A549 (cell line): ENCODE measurements at regions of chr11 and their contacts with region 1.

Region 1: GRCh38 chr11:122628810-122629555 is 26.5 kb upstream of the UBASH3B start:
- DNase-seq: peak; percentile 74 to 75
- ATAC-seq: peak; percentile 93 to 94
- H3K4me3 ChIP-seq: no peak overlapping the region
- H3K27ac ChIP-seq: peak overlapping the region; percentile 65 to 75; a peak in 5 of 6 replicates
- H3K4me1 ChIP-seq: peaks cover 41% of the 10 kb centered on the region
- CTCF ChIP-seq: peak; percentile 67
- EP300 ChIP-seq: no peak
- POLR2A ChIP-seq: no peak
- RAD21 ChIP-seq: peak; percentile 70 to 87

Region 2: DNA sequence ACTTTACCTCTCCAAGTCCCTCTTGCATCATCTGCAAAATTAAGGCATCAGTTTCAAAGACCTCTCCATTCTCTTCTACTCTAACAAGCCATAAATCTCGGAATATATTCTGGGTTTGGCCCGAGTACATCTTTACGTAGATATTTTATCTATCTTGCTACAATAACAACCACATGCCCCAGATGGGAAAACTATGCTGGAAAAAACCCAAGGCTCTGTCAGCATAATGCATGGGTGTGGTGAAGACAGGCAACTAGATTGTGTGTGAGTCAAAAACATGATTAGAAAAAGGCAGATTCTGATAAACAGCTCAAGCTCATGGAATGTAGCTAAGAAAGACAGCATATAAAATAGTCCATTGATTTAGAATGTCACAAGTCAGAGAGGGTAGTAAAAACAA is 284.7 kb before region 1 on chr11:
- CTCF ChIA-PET with region 1: no interaction called
- POLR2A ChIA-PET with region 1: no interaction called
- DNase-seq: no peak
- ATAC-seq: no peak
- H3K4me3 ChIP-seq: no peak overlapping the region
- H3K27ac ChIP-seq: no peak overlapping the region
- H3K4me1 ChIP-seq: peaks cover 7% of the 10 kb centered on the region; the same call in 2 of the 3 replicates
- CTCF ChIP-seq: no peak
- EP300 ChIP-seq: no peak
- POLR2A ChIP-seq: no peak
- RAD21 ChIP-seq: no peak

Region 3: DNA sequence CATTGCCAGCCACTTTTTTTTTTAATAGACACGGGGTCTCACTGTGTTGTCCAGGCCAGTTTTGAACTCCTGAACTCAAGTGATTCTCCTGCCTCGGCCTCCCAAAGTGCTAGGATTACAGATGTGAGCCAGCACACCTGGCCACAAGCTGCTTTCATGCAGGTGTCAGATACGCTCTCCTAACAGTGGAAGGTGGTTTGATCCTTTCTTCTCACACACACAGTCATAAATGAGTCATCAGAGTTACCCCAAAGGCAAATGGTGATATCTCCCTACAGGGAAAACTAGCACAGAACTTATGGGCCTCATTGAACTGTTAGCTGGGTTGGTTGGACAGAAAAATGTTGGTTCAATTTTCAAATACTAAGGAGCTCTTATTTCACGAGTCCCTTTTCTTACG is 11.7 kb before region 1 on chr11:
- CTCF ChIA-PET with region 1: interaction called, 33 read pairs
- POLR2A ChIA-PET with region 1: no interaction called
- DNase-seq: no peak
- ATAC-seq: peak in 1 of 2 experiments; percentile 59; a peak in 1 of 6 replicates
- H3K4me3 ChIP-seq: no peak overlapping the region
- H3K27ac ChIP-seq: no peak overlapping the region
- H3K4me1 ChIP-seq: peaks cover 7% of the 10 kb centered on the region; the same call in 1 of the 3 replicates
- CTCF ChIP-seq: no peak
- EP300 ChIP-seq: no peak
- POLR2A ChIP-seq: no peak
- RAD21 ChIP-seq: no peak

Region 4: GRCh38 chr11:122655527-122656072 is 26.6 kb after region 1 on chr11 and contains the start of gene UBASH3B:
- CTCF ChIA-PET with region 1: interaction called, 12 read pairs
- POLR2A ChIA-PET with region 1: interaction called, 4 read pairs
- DNase-seq: peak; percentile 67 to 84
- ATAC-seq: peak; percentile 83 to 91
- H3K4me3 ChIP-seq: peak within 1 kb of the TSS; percentile 77
- H3K27ac ChIP-seq: peak within 1 kb of the TSS; percentile 91 to 99
- H3K4me1 ChIP-seq: peaks cover 51% of the 10 kb centered on the region
- CTCF ChIP-seq: no peak
- EP300 ChIP-seq: no peak
- POLR2A ChIP-seq: peak; percentile 77
- RAD21 ChIP-seq: no peak; a peak in 1 of 5 replicates
- polyA plus RNA-seq, gene UBASH3B: 43.0 and 52.2 TPM in 2 replicates

Region 5: DNA sequence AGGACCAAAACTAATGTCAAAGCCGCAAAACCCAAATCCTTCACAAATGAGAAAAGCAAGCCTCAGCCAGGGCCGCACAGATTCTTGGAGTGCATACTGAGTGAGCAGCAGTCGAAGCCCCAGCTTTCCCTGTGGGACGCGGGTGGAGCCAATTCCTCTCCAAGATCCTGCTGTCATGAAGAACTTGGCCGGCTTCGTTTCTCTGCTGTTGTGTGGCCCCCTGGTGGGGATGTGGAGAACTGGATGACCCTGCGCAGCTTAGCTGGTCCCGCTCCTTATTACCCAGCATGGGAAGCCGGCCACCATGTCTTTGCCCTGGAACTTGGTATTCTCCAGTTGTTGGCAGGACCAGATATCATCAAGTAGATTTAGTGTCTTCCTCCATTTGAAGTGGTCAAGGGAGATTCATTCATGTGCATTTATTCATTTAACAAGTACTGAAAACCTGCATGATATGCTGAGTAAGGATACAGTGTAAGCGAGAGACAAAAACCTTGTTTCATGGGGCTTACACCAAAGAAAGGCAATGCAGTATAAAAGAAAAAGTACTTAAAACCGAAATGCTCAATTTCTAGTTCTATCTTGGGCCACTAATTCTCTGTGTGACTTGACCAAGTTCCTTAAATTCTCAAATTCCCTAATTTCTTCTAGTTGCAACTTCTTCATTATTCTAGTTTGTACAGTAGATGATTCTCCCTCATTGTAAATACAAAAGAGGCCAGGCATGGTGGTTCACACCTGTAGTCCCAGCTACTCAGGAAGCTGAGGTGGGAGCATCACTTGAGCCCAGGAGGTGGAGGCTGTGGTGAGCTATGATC is 152.6 kb after region 1 on chr11:
- CTCF ChIA-PET with region 1: interaction called, 57 read pairs
- POLR2A ChIA-PET with region 1: no interaction called
- DNase-seq: peak; percentile 83 to 84
- ATAC-seq: peak; percentile 95 to 97
- H3K4me3 ChIP-seq: no peak overlapping the region
- H3K27ac ChIP-seq: peak overlapping the region; percentile 54 to 68; a peak in 5 of 6 replicates
- H3K4me1 ChIP-seq: peaks cover 23% of the 10 kb centered on the region
- CTCF ChIP-seq: peak; percentile 77
- EP300 ChIP-seq: no peak
- POLR2A ChIP-seq: no peak
- RAD21 ChIP-seq: peak; percentile 88 to 92

Region 6: GRCh38 chr11:122796128-122796717 is 167.2 kb after region 1 on chr11:
- CTCF ChIA-PET with region 1: interaction called, 10 read pairs
- POLR2A ChIA-PET with region 1: no interaction called
- DNase-seq: peak; percentile 19 to 26
- ATAC-seq: peak; percentile 54 to 81; a peak in 5 of 6 replicates
- H3K4me3 ChIP-seq: no peak overlapping the region
- H3K27ac ChIP-seq: no peak overlapping the region
- H3K4me1 ChIP-seq: peaks cover 9% of the 10 kb centered on the region
- CTCF ChIP-seq: peak; percentile 43
- EP300 ChIP-seq: no peak
- POLR2A ChIP-seq: no peak
- RAD21 ChIP-seq: peak; percentile 18 to 37; a peak in 2 of 5 replicates

Region 7: GRCh38 chr11:122900587-122901202 is 271.7 kb after region 1 on chr11:
- CTCF ChIA-PET with region 1: no interaction called
- POLR2A ChIA-PET with region 1: no interaction called
- DNase-seq: no peak
- ATAC-seq: no peak
- H3K4me3 ChIP-seq: no peak overlapping the region
- H3K27ac ChIP-seq: no peak overlapping the region
- H3K4me1 ChIP-seq: peaks cover 7% of the 10 kb centered on the region; the same call in 1 of the 3 replicates
- CTCF ChIP-seq: no peak
- EP300 ChIP-seq: no peak
- POLR2A ChIP-seq: no peak
- RAD21 ChIP-seq: no peak